Spleen (tissue), 13 donors: ENCODE measurements at regions of chr9 and their contacts with region 1.

Region 1: DNA sequence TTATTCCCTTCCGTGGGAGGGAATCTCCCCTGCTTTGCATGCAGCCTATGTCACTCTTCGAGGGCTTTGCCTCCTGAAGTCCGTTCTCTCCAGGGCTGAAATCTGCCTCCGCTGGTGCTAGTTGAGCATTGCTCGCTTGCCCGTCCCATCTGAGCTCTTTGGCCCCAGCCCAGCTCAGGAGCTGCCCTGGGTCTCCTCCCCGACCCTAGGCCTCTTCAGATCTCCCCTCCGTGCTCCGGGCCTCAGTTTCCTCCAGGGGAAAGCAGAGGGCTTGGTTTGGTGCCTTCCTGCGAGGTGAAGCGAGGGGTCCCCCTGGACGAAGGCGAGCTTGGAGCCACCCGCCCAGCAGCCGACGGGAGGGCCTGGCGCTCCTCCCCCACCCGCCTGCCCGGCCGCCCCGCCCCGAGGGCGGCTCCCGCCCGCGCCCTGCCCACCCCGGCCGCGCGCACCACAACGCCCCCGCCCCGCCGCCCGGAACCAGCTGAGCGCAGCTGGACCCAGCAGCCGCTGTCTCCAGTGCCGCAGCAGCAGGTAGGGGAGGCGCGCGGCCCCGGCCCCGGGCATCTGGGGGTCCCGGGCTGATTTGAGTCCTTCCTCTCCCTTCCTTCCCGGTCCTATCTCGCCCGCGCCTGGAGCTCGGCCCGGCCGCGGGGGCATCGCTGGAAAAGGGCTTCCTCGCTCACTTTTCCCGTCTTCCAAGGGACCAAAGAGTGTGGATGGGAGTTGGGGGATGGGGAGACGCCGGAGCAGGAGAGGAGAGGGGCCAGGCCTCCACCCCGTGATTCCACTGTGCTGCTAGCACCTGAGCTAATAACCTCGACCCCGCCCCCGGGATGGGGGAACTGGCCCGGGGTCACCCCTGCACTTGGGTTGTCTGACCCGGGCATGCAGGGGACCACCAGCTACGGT is at the start of gene GSN:
- DNase-seq: peak; percentile 96
- H3K4me3 ChIP-seq: peak within 1 kb of the TSS; percentile 42 to 85 (median 76)
- H3K27ac ChIP-seq: peak within 1 kb of the TSS; percentile 53 to 95 (median 88)
- H3K4me1 ChIP-seq: peaks cover 30 to 67% (median 50%) of the 10 kb centered on the region in 6 donors
- H3K27me3 ChIP-seq: no peaks in the 10 kb centered on the region
- CTCF ChIP-seq: no peak
- POLR2A ChIP-seq: no peak
- total RNA-seq, gene GSN: 165 to 432 (median 263) TPM

Region 2: GRCh38 chr9:121213136-121213806 is 54.7 kb before region 1 on chr9:
- intact Hi-C with region 1: loop called (anchors 10 kb)
- DNase-seq: peak; percentile 92
- H3K4me3 ChIP-seq: no peak overlapping the region
- H3K27ac ChIP-seq: peak overlapping the region in 5 of 8 donors; percentile 48 to 67 (median 61)
- H3K4me1 ChIP-seq: peaks cover under 1 to 29% (median 12%) of the 10 kb centered on the region in 6 donors
- H3K27me3 ChIP-seq: no peaks in the 10 kb centered on the region
- CTCF ChIP-seq: peak; percentile 33 to 91 (median 81)
- POLR2A ChIP-seq: no peak